ENCODE measurements at regions of chr3 and their contacts with region 1.

Region 1: DNA sequence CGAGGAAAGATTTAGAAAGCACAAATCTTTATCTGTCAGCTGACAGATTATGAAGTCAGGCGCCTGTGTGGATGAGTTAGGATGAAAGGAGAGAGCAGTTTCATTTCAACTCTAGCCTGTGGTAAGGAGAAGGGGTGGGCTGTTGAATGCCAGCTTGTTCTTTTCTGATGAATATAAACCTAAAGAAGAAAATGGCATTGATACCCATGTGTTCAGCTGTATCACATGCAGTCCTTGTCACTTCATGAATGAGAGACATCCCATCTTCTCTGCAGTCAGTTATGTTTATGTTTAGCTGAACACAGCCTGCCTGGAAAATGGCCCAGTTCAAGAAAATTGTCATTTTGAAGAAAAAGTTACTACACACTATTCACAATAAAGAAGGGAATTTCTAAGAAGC is 345.7 kb upstream of the RBMS3 start:
- DNase-seq: peak; percentile 9
- H3K4me3 Mint-ChIP-seq: no peak overlapping the region
- H3K27ac Mint-ChIP-seq: peak overlapping the region; percentile 44
- H3K4me1 Mint-ChIP-seq: peaks cover 14% of the 10 kb centered on the region
- H3K27me3 Mint-ChIP-seq: peaks cover 3% of the 10 kb centered on the region

Region 2: DNA sequence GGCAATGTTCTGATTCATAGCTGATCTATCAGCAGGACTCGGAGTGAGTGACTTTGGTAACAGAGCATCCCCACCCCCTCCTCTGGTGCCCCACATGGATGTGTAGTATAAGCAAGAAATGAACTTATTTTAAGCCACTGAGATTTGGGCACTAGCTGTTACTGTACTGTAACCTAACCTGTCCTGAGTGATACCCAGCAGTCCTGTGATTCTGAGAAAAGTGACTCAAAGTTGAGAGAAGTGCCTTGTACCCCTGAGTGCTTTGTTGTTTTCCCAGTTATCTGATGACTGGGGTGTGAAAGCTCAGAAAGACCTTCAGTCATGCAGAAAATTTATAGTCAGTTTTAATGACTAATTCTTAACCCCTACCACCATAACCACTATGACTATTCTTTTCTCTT is 94.2 kb before region 1 on chr3:
- CTCF ChIA-PET with region 1: no interaction called
- intact Hi-C with region 1: loop called (anchors 1 kb)
- DNase-seq: peak; percentile 22
- H3K4me3 Mint-ChIP-seq: no peak overlapping the region
- H3K27ac Mint-ChIP-seq: no peak overlapping the region
- H3K4me1 Mint-ChIP-seq: peaks cover 5% of the 10 kb centered on the region
- H3K27me3 Mint-ChIP-seq: peaks cover 2% of the 10 kb centered on the region

Region 3: DNA sequence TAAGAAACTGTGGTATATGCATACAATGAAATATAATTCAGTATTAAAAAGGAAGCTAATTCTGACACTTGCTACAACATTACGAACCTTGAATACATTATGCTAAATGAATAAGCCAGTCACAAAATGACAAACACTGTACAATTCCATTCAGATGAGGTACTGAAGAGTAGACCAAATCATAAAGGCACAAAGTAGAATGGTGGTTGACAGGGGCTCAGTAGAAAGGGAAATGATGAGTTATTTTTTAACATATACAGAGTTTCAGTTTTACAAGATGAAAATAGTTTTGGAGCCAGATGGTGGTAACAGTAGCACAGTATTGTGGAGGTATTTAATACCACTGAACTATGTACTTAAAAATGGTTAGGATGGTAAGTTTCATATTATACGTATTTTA is 91.1 kb after region 1 on chr3:
- CTCF ChIA-PET with region 1: no interaction called
- intact Hi-C with region 1: loop called (anchors 1 kb)
- DNase-seq: no peak
- H3K4me3 Mint-ChIP-seq: no peak overlapping the region
- H3K27ac Mint-ChIP-seq: no peak overlapping the region
- H3K4me1 Mint-ChIP-seq: no peaks in the 10 kb centered on the region
- H3K27me3 Mint-ChIP-seq: no peaks in the 10 kb centered on the region

Region 4: GRCh38 chr3:29137601-29138000 is 202.5 kb after region 1 on chr3:
- CTCF ChIA-PET with region 1: no interaction called
- intact Hi-C with region 1: loop called (anchors 5 kb)
- DNase-seq: peak; percentile 34
- H3K4me3 Mint-ChIP-seq: no peak overlapping the region
- H3K27ac Mint-ChIP-seq: no peak overlapping the region
- H3K4me1 Mint-ChIP-seq: peaks cover 3% of the 10 kb centered on the region
- H3K27me3 Mint-ChIP-seq: no peaks in the 10 kb centered on the region

Measured in activated naive CD4-positive, alpha-beta T cell treated with anti-CD3 and anti-CD28 coated beads for 36 hours (primary cell).